ENCODE measurements at regions of chr16 and their contacts with region 1.

Region 1: GRCh38 chr16:11379420-11379819 is 34.2 kb downstream of the RMI2 start:
- DNase-seq: peak; percentile 63
- H3K4me3 Mint-ChIP-seq: no peak overlapping the region
- H3K27ac Mint-ChIP-seq: peak overlapping the region; percentile 10
- H3K4me1 Mint-ChIP-seq: peaks cover 13% of the 10 kb centered on the region
- H3K27me3 Mint-ChIP-seq: no peaks in the 10 kb centered on the region

Region 2: GRCh38 chr16:10242916-10243315 is 1136.5 kb before region 1 on chr16:
- CTCF ChIA-PET with region 1: no interaction called
- intact Hi-C with region 1: no loop called
- DNase-seq: no peak
- H3K4me3 Mint-ChIP-seq: no peak overlapping the region
- H3K27ac Mint-ChIP-seq: no peak overlapping the region
- H3K4me1 Mint-ChIP-seq: no peaks in the 10 kb centered on the region
- H3K27me3 Mint-ChIP-seq: peaks cover 1% of the 10 kb centered on the region

Region 3: GRCh38 chr16:11396241-11397048 is 17.0 kb after region 1 on chr16:
- CTCF ChIA-PET with region 1: interaction called, 17 read pairs
- intact Hi-C with region 1: no loop called
- DNase-seq: peak; percentile 77
- H3K4me3 Mint-ChIP-seq: no peak overlapping the region
- H3K27ac Mint-ChIP-seq: no peak overlapping the region
- H3K4me1 Mint-ChIP-seq: no peaks in the 10 kb centered on the region
- H3K27me3 Mint-ChIP-seq: no peaks in the 10 kb centered on the region